SK-N-SH (cell line): ENCODE measurements at regions of chr7 and their contacts with region 1.

Region 1: GRCh38 chr7:127708788-127709187 is 56.8 kb downstream of the SND1 start:
- DNase-seq: peak; percentile 61
- H3K4me3 ChIP-seq: no peak overlapping the region
- H3K27ac ChIP-seq: peak overlapping the region in 1 of 2 experiments; percentile 82; a peak in 3 of 4 replicates
- H3K4me1 ChIP-seq: peaks cover 10 to 17% of the 10 kb centered on the region in 2 experiments
- H3K27me3 ChIP-seq: no peaks in the 10 kb centered on the region
- CTCF ChIP-seq: peak; percentile 96
- EP300 ChIP-seq: no peak
- RAD21 ChIP-seq: peak; percentile 99

Region 2: GRCh38 chr7:127158659-127159058 is 550.1 kb before region 1 on chr7:
- CTCF ChIA-PET with region 1: no interaction called
- POLR2A ChIA-PET with region 1: no interaction called
- DNase-seq: no peak
- H3K4me3 ChIP-seq: no peak overlapping the region
- H3K27ac ChIP-seq: no peak overlapping the region
- H3K4me1 ChIP-seq: no peaks in the 10 kb centered on the region
- H3K27me3 ChIP-seq: no peaks in the 10 kb centered on the region
- CTCF ChIP-seq: peak; percentile 55
- EP300 ChIP-seq: no peak
- RAD21 ChIP-seq: peak; percentile 17; the same call in 1 of the 2 replicates

Region 3: DNA sequence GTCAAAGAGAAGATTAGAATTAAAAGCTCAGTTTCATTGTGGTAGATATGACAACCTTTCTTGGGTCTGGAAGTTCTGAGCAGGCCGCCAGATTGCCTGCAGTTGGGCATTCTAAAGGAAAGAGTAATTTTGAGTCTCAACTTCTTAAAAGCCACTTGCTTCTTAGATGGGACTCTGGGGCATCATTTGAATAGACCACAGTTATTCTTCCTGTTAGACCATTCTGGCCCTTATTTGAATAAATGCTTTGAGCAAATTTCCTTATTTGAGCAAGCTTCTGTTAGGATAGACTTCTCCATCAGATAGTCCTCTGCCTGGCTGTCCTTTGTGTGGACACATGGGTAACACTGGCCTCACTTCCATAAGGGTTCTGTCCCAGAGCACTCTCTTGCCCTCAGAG is 16.6 kb before region 1 on chr7:
- CTCF ChIA-PET with region 1: interaction called, 22 read pairs
- POLR2A ChIA-PET with region 1: no interaction called
- DNase-seq: no peak
- H3K4me3 ChIP-seq: no peak overlapping the region
- H3K27ac ChIP-seq: no peak overlapping the region
- H3K4me1 ChIP-seq: peaks cover 0 to 3% of the 10 kb centered on the region in 2 experiments; a peak in 1 of 4 replicates
- H3K27me3 ChIP-seq: no peaks in the 10 kb centered on the region
- CTCF ChIP-seq: no peak
- EP300 ChIP-seq: no peak
- RAD21 ChIP-seq: no peak

Region 4: GRCh38 chr7:127733986-127734385 is 25.2 kb after region 1 on chr7:
- CTCF ChIA-PET with region 1: interaction called, 18 read pairs
- POLR2A ChIA-PET with region 1: no interaction called
- DNase-seq: no peak
- H3K4me3 ChIP-seq: no peak overlapping the region
- H3K27ac ChIP-seq: peak overlapping the region in 1 of 2 experiments; percentile 76; a peak in 2 of 4 replicates
- H3K4me1 ChIP-seq: peaks cover 5 to 37% of the 10 kb centered on the region in 2 experiments; a peak in 3 of 4 replicates
- H3K27me3 ChIP-seq: no peaks in the 10 kb centered on the region
- CTCF ChIP-seq: no peak
- EP300 ChIP-seq: no peak
- RAD21 ChIP-seq: no peak

Region 5: GRCh38 chr7:127792528-127793342 is 83.9 kb after region 1 on chr7:
- CTCF ChIA-PET with region 1: interaction called, 15 read pairs
- POLR2A ChIA-PET with region 1: no interaction called
- DNase-seq: no peak
- H3K4me3 ChIP-seq: no peak overlapping the region
- H3K27ac ChIP-seq: peak overlapping the region in 1 of 2 experiments; percentile 16; a peak in 1 of 4 replicates
- H3K4me1 ChIP-seq: peaks cover 12% of the 10 kb centered on the region in 2 experiments; a peak in 2 of 4 replicates
- H3K27me3 ChIP-seq: no peaks in the 10 kb centered on the region
- CTCF ChIP-seq: peak; percentile 63
- EP300 ChIP-seq: no peak
- RAD21 ChIP-seq: peak; percentile 35; the same call in 1 of the 2 replicates

Region 6: DNA sequence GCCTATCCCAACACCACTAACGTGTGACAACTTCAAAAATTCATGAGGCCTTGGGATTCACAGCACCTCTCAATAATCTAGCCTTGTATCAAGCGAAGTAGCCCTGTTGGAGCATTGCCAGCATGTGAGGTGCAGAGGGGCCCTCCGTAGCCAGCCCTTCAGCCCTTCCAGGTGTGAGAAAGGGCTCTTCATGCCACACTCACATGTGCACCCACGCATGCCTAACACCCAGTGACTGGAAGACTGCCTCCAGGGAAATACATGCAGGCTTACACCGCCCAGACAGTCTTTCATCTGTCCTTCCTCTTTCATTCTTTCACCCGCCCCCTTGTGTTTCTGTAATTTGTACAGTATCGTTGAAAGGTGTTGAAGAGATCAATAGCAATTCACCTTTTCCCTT is 296.3 kb after region 1 on chr7:
- CTCF ChIA-PET with region 1: interaction called, 11 read pairs
- POLR2A ChIA-PET with region 1: no interaction called
- DNase-seq: no peak
- H3K4me3 ChIP-seq: no peak overlapping the region
- H3K27ac ChIP-seq: no peak overlapping the region
- H3K4me1 ChIP-seq: peaks cover 0 to 12% of the 10 kb centered on the region in 2 experiments; a peak in 1 of 4 replicates
- H3K27me3 ChIP-seq: no peaks in the 10 kb centered on the region
- CTCF ChIP-seq: no peak
- EP300 ChIP-seq: no peak
- RAD21 ChIP-seq: no peak

Region 7: DNA sequence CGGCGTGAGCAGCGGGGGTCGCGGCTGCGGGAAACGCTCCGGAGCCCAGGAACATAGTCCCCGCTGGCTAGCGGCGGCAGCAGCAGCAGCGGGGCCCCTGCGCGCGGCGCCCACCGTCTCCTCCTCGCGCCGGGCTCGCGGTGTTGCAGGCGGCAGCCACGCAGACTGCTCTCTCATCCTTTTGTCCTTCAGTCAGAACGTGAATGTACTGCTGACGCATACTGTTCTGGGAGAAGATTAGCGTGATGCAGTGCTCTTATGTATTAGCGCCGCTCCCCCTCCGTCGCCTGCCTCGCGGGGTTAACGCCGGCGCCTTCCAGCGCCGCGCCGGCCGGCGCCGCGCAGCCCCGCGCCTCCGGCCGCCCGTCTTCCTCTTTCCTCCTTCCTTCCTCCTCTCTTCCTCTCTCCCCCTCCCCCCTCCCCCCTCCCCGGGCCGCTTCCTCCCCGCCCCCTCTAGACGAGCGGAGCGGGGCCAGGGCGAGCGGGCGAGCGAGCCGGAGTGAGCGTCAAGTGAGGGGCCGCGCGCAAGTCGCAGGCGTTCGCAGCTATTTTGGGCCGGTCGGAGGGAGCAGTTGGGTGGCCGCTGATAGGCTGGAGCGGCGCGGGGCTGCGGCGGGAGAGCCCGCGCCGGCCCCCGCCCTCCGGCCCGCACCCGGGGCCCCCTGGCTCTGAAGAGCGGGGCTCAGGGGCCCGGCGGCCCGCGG is 323.3 kb after region 1 on chr7:
- CTCF ChIA-PET with region 1: interaction called, 70 read pairs
- POLR2A ChIA-PET with region 1: no interaction called
- DNase-seq: peak; percentile 92
- H3K4me3 ChIP-seq: peak overlapping the region; percentile 55 to 62
- H3K27ac ChIP-seq: peak overlapping the region in 1 of 2 experiments; percentile 51; a peak in 2 of 4 replicates
- H3K4me1 ChIP-seq: peaks cover 0 to 19% of the 10 kb centered on the region in 2 experiments; a peak in 2 of 4 replicates
- H3K27me3 ChIP-seq: no peaks in the 10 kb centered on the region
- CTCF ChIP-seq: peak; percentile 44
- EP300 ChIP-seq: peak in 1 of 2 experiments; percentile 11; a peak in 1 of 4 replicates
- RAD21 ChIP-seq: peak; percentile 43

Region 8: GRCh38 chr7:128201051-128201689 is 492.4 kb after region 1 on chr7:
- CTCF ChIA-PET with region 1: interaction called, 444 read pairs
- POLR2A ChIA-PET with region 1: no interaction called
- DNase-seq: peak; percentile 93
- H3K4me3 ChIP-seq: peak overlapping the region in 1 of 2 experiments; percentile 10; a peak in 1 of 4 replicates
- H3K27ac ChIP-seq: no peak overlapping the region
- H3K4me1 ChIP-seq: peaks cover 0 to 8% of the 10 kb centered on the region in 2 experiments; a peak in 1 of 4 replicates
- H3K27me3 ChIP-seq: peaks cover 25% of the 10 kb centered on the region
- CTCF ChIP-seq: no peak
- EP300 ChIP-seq: no peak
- RAD21 ChIP-seq: no peak